CD8-positive, alpha-beta T cell (primary cell): ENCODE measurements at regions of chr1 and their contacts with region 1.

Region 1: GRCh38 chr1:31789259-31790065 is 25.3 kb upstream of the ADGRB2 start:
- DNase-seq: peak; percentile 92 to 98 (median 96)
- ATAC-seq: peak; percentile 81
- H3K4me3 ChIP-seq: peak overlapping the region; percentile 68 to 71
- H3K4me3 Mint-ChIP-seq: peak overlapping the region; percentile 91
- H3K27ac ChIP-seq: no peak overlapping the region
- H3K27ac Mint-ChIP-seq: no peak overlapping the region
- H3K4me1 ChIP-seq: peaks cover 11% of the 10 kb centered on the region
- H3K4me1 Mint-ChIP-seq: peaks cover 15% of the 10 kb centered on the region
- H3K27me3 ChIP-seq: no peaks in the 10 kb centered on the region
- H3K27me3 Mint-ChIP-seq: no peaks in the 10 kb centered on the region
- CTCF ChIP-seq: peak; percentile 67

Region 2: DNA sequence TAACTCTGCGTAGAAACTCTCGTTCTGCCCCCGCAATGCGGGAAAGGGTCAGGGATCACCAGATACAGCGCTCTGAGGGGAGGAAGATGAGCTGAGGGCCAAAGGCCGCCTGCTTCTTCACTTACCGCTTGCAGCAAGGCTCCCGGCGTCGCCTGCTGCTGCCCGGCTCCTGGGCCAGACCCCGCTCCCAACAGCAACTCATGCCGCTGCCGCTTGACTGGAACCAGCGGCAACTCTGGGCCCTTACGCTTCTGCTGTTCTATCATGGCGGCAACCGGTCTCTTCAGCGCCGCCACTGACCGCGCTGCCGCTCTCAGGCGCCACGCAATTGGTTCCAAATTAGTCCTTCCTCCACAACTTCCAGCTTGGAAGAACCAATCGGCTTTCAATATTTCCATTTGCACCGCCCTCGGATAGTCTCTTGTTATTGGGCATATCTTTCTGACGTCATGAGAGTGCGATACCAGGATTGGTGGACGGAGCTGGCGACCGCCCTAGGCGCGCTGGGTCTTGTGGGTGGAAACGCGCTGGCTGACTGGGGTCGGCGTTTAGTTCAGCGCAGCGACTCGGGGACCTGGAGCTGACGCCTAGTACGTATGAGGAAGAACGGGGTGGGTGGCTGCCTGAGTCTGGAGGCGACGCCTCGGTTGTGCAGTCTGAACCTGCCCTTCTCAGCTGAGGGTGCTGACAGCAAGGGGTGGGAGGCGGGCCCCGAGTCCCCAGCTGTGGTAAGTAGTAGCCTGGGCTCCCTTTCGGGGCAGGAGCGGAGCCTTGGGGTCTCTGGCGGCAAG is 492.8 kb before region 1 on chr1 and contains the starts of genes SNRNP40 and ZCCHC17:
- CTCF ChIA-PET with region 1: no interaction called
- POLR2A ChIA-PET with region 1: no interaction called
- intact Hi-C with region 1: loop called in 1 of 2 experiments (anchors 10 kb)
- DNase-seq: peak; percentile 85 to 99 (median 91)
- ATAC-seq: peak; percentile 90
- H3K4me3 ChIP-seq: peak within 1 kb of the TSS; percentile 67 to 83
- H3K4me3 Mint-ChIP-seq: no peak within 1 kb of the TSS
- H3K27ac ChIP-seq: peak within 1 kb of the TSS; percentile 90 to 92
- H3K27ac Mint-ChIP-seq: no peak within 1 kb of the TSS
- H3K4me1 ChIP-seq: peaks cover 31% of the 10 kb centered on the region
- H3K4me1 Mint-ChIP-seq: peaks cover 35% of the 10 kb centered on the region
- H3K27me3 ChIP-seq: no peaks in the 10 kb centered on the region
- H3K27me3 Mint-ChIP-seq: no peaks in the 10 kb centered on the region
- CTCF ChIP-seq: no peak
- total RNA-seq, gene SNRNP40: 78.3 to 81.9 TPM
- total RNA-seq, gene ZCCHC17: 7.2 to 8.0 TPM

Region 3: GRCh38 chr1:31564134-31564989 is 225.1 kb before region 1 on chr1:
- CTCF ChIA-PET with region 1: interaction called, 32 read pairs
- POLR2A ChIA-PET with region 1: no interaction called
- intact Hi-C with region 1: loop called in 1 of 2 experiments (anchors 1 kb)
- DNase-seq: peak in 7 of 9 experiments; percentile 26 to 64 (median 53)
- ATAC-seq: peak; percentile 66
- H3K4me3 ChIP-seq: no peak overlapping the region
- H3K4me3 Mint-ChIP-seq: no peak overlapping the region
- H3K27ac ChIP-seq: no peak overlapping the region
- H3K27ac Mint-ChIP-seq: no peak overlapping the region
- H3K4me1 ChIP-seq: no peaks in the 10 kb centered on the region
- H3K4me1 Mint-ChIP-seq: no peaks in the 10 kb centered on the region
- H3K27me3 ChIP-seq: no peaks in the 10 kb centered on the region
- H3K27me3 Mint-ChIP-seq: peaks cover 27% of the 10 kb centered on the region
- CTCF ChIP-seq: peak; percentile 76

Region 4: GRCh38 chr1:31669786-31670592 is 119.5 kb before region 1 on chr1:
- CTCF ChIA-PET with region 1: interaction called, 150 read pairs
- POLR2A ChIA-PET with region 1: no interaction called
- intact Hi-C with region 1: no loop called
- DNase-seq: peak in 8 of 9 experiments; percentile 9 to 64 (median 50)
- ATAC-seq: peak; percentile 91
- H3K4me3 ChIP-seq: peak overlapping the region; percentile 7 to 21
- H3K4me3 Mint-ChIP-seq: peak overlapping the region; percentile 76
- H3K27ac ChIP-seq: no peak overlapping the region
- H3K27ac Mint-ChIP-seq: peak overlapping the region; percentile 0
- H3K4me1 ChIP-seq: peaks cover 12% of the 10 kb centered on the region
- H3K4me1 Mint-ChIP-seq: peaks cover 15% of the 10 kb centered on the region
- H3K27me3 ChIP-seq: no peaks in the 10 kb centered on the region
- H3K27me3 Mint-ChIP-seq: peaks cover 17% of the 10 kb centered on the region
- CTCF ChIP-seq: peak; percentile 14

Region 5: GRCh38 chr1:31771891-31772668 is 17.4 kb before region 1 on chr1:
- CTCF ChIA-PET with region 1: interaction called, 23 read pairs
- POLR2A ChIA-PET with region 1: interaction called, 3 read pairs
- intact Hi-C with region 1: no loop called
- DNase-seq: peak in 6 of 9 experiments; percentile 42 to 64 (median 55)
- ATAC-seq: peak; percentile 77
- H3K4me3 ChIP-seq: peak overlapping the region; percentile 52 to 78
- H3K4me3 Mint-ChIP-seq: peak overlapping the region; percentile 82
- H3K27ac ChIP-seq: no peak overlapping the region
- H3K27ac Mint-ChIP-seq: peak overlapping the region; percentile 24
- H3K4me1 ChIP-seq: peaks cover 25% of the 10 kb centered on the region
- H3K4me1 Mint-ChIP-seq: peaks cover 37% of the 10 kb centered on the region
- H3K27me3 ChIP-seq: peaks cover 0 to 15% of the 10 kb centered on the region in 2 experiments
- H3K27me3 Mint-ChIP-seq: peaks cover 30% of the 10 kb centered on the region
- CTCF ChIP-seq: no peak

Region 6: GRCh38 chr1:31961536-31961935 is 172.1 kb after region 1 on chr1:
- CTCF ChIA-PET with region 1: interaction called, 38 read pairs
- POLR2A ChIA-PET with region 1: no interaction called
- intact Hi-C with region 1: loop called in 1 of 2 experiments (anchors 1 kb)
- DNase-seq: no peak
- ATAC-seq: no peak
- H3K4me3 ChIP-seq: no peak overlapping the region
- H3K4me3 Mint-ChIP-seq: no peak overlapping the region
- H3K27ac ChIP-seq: no peak overlapping the region
- H3K27ac Mint-ChIP-seq: no peak overlapping the region
- H3K4me1 ChIP-seq: peaks cover 27% of the 10 kb centered on the region
- H3K4me1 Mint-ChIP-seq: peaks cover 35% of the 10 kb centered on the region
- H3K27me3 ChIP-seq: no peaks in the 10 kb centered on the region
- H3K27me3 Mint-ChIP-seq: no peaks in the 10 kb centered on the region
- CTCF ChIP-seq: no peak

Region 7: GRCh38 chr1:32394141-32394889 is 604.9 kb after region 1 on chr1 and contains the start of gene BSDC1:
- CTCF ChIA-PET with region 1: no interaction called
- POLR2A ChIA-PET with region 1: no interaction called
- intact Hi-C with region 1: loop called in 1 of 2 experiments (anchors 2 kb)
- DNase-seq: peak; percentile 97 to 99 (median 98)
- ATAC-seq: peak; percentile 98
- H3K4me3 ChIP-seq: peak within 1 kb of the TSS; percentile 75 to 92
- H3K4me3 Mint-ChIP-seq: peak within 1 kb of the TSS; percentile 99
- H3K27ac ChIP-seq: peak within 1 kb of the TSS; percentile 86 to 98
- H3K27ac Mint-ChIP-seq: peak within 1 kb of the TSS; percentile 100
- H3K4me1 ChIP-seq: peaks cover 11% of the 10 kb centered on the region
- H3K4me1 Mint-ChIP-seq: peaks cover 31% of the 10 kb centered on the region
- H3K27me3 ChIP-seq: no peaks in the 10 kb centered on the region
- H3K27me3 Mint-ChIP-seq: no peaks in the 10 kb centered on the region
- CTCF ChIP-seq: no peak
- total RNA-seq, gene BSDC1: 189 to 201 TPM